HCT116 (cell line): ENCODE measurements at regions of chr7 and their contacts with region 1.

Region 1: DNA sequence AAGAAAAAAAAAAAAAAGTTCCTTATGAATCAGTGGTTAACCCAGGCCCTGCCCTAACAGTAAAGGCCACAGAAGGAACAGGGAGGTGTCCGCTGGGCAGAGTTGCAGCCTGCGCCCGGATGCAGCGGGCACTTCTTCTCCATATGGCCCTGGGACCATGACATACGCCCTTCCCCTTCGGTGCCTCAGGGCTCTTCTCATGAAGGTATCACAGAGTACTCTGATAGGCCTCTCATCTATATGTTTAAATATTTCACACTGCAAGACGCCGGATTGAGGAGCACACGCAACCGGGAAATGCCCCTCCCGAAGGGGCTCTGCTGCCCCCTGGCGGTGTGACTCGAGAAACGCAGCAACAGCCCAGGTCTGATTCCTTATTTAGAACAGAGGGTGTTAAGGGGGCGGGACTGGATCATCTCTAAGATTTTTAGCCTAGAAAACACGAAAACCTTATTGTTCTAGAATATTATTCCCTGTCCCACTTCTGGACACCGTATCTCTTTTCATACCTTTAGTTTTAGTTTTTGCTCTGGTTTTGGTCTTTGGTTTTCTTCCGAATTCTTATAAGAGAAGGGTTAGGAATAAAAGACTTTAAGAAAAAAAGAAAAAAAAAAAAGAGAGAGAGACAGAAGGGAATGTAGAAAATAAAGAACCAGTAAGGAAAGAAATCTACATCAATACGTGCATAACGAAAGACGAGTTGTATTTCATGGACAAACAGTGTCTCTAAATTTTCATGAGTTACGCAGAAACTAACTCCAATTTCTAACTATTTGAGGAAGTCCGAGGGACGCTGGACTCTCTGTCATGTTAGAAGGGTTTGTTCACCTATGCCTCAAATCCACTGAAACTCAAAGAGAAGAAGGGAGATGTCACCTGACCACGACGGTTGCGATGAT is 12.0 kb downstream of the DAGLB start:
- DNase-seq: no peak
- ATAC-seq: peak; percentile 88
- H3K4me3 ChIP-seq: no peak overlapping the region
- H3K27ac ChIP-seq: peak overlapping the region; percentile 66
- H3K4me1 ChIP-seq: peaks cover 36 to 80% of the 10 kb centered on the region in 2 experiments
- H3K27me3 ChIP-seq: no peaks in the 10 kb centered on the region
- CTCF ChIP-seq: peak; percentile 73 to 98 (median 95); a peak in 5 of 6 replicates
- POLR2A ChIP-seq: no peak
- RAD21 ChIP-seq: peak; percentile 92

Region 2: GRCh38 chr7:5997222-5997808 is 438.4 kb before region 1 on chr7:
- CTCF ChIA-PET with region 1: no interaction called
- POLR2A ChIA-PET with region 1: no interaction called
- RAD21 ChIA-PET with region 1: no interaction called
- intact Hi-C with region 1: loop called (anchors 1 kb)
- DNase-seq: no peak
- ATAC-seq: peak; percentile 82
- H3K4me3 ChIP-seq: no peak overlapping the region
- H3K27ac ChIP-seq: no peak overlapping the region
- H3K4me1 ChIP-seq: peaks cover 0 to 8% of the 10 kb centered on the region in 2 experiments; a peak in 1 of 4 replicates
- H3K27me3 ChIP-seq: no peaks in the 10 kb centered on the region
- CTCF ChIP-seq: peak; percentile 53 to 76 (median 67)
- POLR2A ChIP-seq: no peak
- RAD21 ChIP-seq: peak; percentile 89

Region 3: DNA sequence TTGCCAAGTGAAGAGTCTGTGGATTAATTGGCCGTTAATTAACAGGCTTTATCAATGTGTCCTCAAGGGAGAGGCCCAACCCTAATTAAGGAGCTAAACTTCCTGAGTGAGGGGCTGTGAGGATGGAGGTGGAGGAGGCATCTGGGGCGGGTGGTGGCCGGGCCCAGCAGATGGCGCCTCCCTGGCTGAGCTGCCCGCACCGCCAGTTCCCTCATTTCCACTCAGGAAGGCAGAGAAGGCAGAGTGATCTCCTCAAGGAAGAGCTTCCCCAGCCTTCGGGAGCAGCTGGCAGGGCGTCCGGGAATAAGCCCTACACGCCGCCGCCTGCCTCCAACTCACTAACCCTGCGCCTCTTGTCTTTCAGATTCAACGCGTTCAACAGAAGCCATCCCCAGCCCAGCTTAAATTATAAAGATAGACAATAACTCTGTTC is 275.5 kb before region 1 on chr7:
- CTCF ChIA-PET with region 1: interaction called, 3 read pairs
- POLR2A ChIA-PET with region 1: no interaction called
- RAD21 ChIA-PET with region 1: no interaction called
- intact Hi-C with region 1: loop called (anchors 2 kb)
- DNase-seq: no peak
- ATAC-seq: peak; percentile 68
- H3K4me3 ChIP-seq: no peak overlapping the region
- H3K27ac ChIP-seq: no peak overlapping the region
- H3K4me1 ChIP-seq: no peaks in the 10 kb centered on the region
- H3K27me3 ChIP-seq: no peaks in the 10 kb centered on the region
- CTCF ChIP-seq: peak; percentile 39 to 65 (median 53); a peak in 5 of 6 replicates
- POLR2A ChIP-seq: no peak
- RAD21 ChIP-seq: peak; percentile 58

Region 4: DNA sequence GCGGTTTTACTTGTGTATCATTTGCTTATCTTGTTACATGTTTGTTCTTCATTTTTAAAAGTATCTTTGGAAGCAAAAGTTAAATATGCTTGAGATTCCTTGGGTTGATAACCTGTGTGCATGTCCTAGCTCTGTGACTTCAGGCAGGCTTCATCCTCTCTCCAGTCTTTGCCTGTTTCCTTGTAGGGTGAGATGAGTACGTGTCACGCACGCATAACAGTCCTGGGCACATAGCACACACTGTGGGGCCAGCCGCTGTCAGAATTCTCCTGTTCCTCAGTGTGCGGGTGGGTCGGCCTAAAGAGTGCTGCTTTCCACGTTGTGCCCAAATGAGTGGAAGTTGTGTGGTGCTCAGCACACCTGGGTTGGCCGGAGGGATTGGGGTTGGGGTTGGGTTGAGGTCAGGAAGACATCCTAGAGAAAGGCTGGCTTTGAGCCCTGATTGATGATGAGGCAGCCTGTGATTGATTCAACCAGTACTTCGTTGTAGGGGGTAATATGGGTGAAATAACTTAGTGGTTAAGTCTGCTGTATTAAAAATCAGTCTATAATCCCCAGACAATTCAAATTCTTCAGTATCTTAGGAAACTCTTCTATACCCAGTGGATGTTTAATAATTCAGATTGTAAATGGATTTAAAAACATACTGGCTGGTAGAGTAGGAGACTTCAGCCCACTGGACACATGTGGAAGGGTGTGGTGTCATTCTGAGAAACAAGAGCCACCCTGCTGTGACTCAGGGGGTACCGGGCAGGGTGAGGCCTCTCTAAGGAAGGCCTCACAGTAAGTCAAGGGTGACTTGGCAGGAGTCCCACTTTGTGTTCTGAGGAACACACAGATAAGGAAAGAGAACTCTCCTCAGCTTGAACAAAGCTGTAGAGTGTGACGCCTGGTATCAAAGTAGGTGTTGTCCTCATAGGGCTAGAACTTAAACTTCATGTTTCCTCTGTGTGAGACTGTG is 42.7 kb before region 1 on chr7:
- CTCF ChIA-PET with region 1: no interaction called
- POLR2A ChIA-PET with region 1: no interaction called
- RAD21 ChIA-PET with region 1: no interaction called
- intact Hi-C with region 1: no loop called
- DNase-seq: peak; percentile 69
- ATAC-seq: peak; percentile 87
- H3K4me3 ChIP-seq: peak overlapping the region in 1 of 2 experiments; percentile 31; a peak in 2 of 4 replicates
- H3K27ac ChIP-seq: peak overlapping the region; percentile 60
- H3K4me1 ChIP-seq: peaks cover 22 to 46% of the 10 kb centered on the region in 2 experiments
- H3K27me3 ChIP-seq: no peaks in the 10 kb centered on the region
- CTCF ChIP-seq: no peak
- POLR2A ChIP-seq: no peak
- RAD21 ChIP-seq: no peak